Ascending aorta (tissue), 2 donors: ENCODE measurements at regions of chr10 and their contacts with region 1.

Region 1: DNA sequence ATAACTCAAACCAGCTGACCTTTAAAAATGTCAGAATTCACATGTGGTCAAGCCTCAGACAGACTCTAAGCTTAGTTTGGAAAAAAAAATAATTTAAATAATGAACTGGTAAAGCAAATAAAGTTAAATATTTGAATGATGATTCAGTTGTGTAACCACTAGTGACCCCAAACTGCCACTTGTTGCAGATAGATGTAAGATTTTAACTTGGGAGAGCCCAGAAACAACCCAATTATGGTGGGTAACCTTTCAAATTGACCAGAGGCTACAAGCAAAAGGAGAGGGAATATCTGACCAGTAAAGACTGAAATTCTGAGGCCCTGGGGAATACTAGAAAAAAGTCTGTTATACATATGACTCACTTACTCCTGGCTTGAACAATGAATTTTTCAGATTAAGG is 268.1 kb downstream of the HPSE2 start:
- DNase-seq: no peak
- H3K4me3 ChIP-seq: no peak overlapping the region
- H3K27ac ChIP-seq: peak overlapping the region; percentile 42 to 59
- H3K4me1 ChIP-seq: no peaks in the 10 kb centered on the region
- H3K27me3 ChIP-seq: no peaks in the 10 kb centered on the region
- CTCF ChIP-seq: no peak

Region 2: DNA sequence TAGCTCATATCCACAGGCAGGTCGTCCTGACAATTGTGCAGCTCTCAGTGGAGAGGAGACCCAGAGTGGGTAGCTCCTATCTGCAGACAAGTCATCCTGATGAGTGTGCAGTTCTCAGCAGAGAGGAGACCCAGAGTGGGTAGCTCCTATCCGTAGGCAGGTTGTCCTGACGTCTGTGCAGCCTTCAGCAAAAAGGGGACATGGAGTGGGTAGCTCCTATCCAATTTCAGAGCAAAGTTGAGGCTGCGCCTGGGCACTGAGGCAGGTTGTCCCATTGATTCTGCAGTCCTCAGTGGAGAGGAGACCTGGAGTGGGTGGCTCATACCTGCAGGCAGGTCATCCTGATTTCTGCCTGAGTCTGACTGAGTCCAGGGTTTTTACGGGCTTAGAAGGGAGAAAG is 156.2 kb after region 1 on chr10:
- intact Hi-C with region 1: loop called (anchors 5 kb)
- DNase-seq: no peak
- H3K4me3 ChIP-seq: no peak overlapping the region
- H3K27ac ChIP-seq: peak overlapping the region; percentile 7 to 19
- H3K4me1 ChIP-seq: no peaks in the 10 kb centered on the region
- H3K27me3 ChIP-seq: no peaks in the 10 kb centered on the region
- CTCF ChIP-seq: no peak

Region 3: GRCh38 chr10:99234041-99234790 is 266.6 kb after region 1 on chr10:
- intact Hi-C with region 1: loop called (anchors 10 kb)
- DNase-seq: peak in 1 of 2 donors; percentile 69
- H3K4me3 ChIP-seq: peak overlapping the region; percentile 64 to 81
- H3K27ac ChIP-seq: peak overlapping the region; percentile 46 to 49
- H3K4me1 ChIP-seq: peaks cover 3 to 8% of the 10 kb centered on the region in 2 donors
- H3K27me3 ChIP-seq: peaks cover 5% of the 10 kb centered on the region
- CTCF ChIP-seq: no peak